CD4-positive, alpha-beta T cell (primary cell): ENCODE measurements at regions of chr15 and their contacts with region 1.

Region 1: DNA sequence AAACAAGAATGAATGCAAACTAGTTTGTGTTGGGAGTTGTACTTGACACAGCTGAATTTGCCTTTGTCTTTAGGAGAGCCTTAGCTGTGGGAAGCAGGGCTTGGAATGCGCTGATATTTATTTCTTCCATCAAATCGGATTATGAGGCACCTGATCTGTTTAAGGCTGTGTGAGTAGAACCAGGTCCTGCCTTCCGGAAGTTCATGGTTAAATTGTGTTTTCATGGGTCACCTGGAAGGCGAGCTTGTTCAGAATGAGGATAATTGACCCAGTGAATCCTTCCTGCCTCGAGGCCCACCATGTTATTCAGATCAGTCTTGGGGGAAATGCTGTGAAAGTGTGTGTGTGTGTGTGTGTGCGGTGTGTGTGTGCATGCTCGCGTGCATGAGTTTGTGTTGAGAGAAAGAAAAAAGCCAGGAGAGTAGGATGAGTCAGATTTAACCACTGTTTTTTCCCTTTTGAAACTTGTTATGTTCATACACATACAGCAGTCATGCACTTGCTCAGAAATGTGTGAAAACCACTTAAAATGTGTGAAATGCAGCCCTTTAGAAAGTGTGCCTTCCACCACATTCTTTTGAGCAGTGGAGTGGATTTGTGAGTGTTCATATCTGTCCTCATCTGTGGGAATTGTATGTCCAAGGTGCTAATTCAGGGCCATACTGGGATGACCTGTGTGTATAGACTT is 36.7 kb downstream of the SMAD3 start:
- DNase-seq: peak in 9 of 14 experiments; percentile 27 to 88 (median 62)
- ATAC-seq: peak; percentile 41
- H3K4me3 ChIP-seq: peak overlapping the region; percentile 27
- H3K4me3 Mint-ChIP-seq: no peak overlapping the region
- H3K27ac ChIP-seq: peak overlapping the region; percentile 56 to 82
- H3K27ac Mint-ChIP-seq: no peak overlapping the region
- H3K4me1 ChIP-seq: peaks cover 98% of the 10 kb centered on the region
- H3K4me1 Mint-ChIP-seq: peaks cover 26% of the 10 kb centered on the region
- H3K27me3 ChIP-seq: no peaks in the 10 kb centered on the region
- H3K27me3 Mint-ChIP-seq: no peaks in the 10 kb centered on the region
- CTCF ChIP-seq: no peak

Region 2: DNA sequence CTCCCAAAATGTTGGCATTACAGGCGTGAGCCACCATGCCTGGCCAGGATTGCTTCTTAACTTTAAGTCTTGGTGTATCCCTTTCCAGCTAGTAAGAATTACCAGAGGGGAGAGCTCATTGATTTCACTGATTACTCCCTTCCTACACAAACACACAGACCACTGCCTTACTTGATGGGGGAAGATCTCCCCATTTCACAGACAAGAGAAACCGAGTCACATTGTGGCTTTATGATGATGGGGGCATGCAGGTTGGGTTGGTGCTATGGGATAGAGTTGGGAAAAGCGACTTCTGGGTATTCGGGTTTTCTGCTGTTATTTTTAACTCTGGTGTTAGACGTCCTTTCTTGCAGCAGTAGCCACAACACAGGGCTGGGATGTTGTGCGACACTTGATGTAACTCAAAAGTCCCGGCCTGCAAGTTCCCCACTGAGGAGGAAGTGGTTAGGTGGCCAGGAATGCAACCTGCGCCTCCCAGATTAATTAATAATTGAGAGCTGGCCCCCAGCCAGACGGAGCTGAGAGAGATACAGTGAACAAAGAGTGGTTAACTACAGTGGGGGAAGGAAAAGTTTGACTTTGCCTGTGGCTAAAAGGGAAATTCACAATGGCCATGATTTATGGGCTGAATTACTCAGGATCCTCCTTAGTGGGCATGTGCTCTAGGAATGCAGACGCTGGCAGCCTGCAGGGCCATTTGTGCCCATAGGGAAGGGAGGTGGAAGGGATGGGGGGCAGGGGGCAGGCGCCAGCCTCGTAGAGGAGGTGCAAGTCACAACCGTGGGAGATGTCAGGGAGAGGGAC is 336.4 kb before region 1 on chr15:
- CTCF ChIA-PET with region 1: no interaction called
- POLR2A ChIA-PET with region 1: no interaction called
- intact Hi-C with region 1: no loop called
- DNase-seq: peak in 3 of 14 experiments; percentile 5 to 25 (median 21)
- ATAC-seq: no peak
- H3K4me3 ChIP-seq: no peak overlapping the region
- H3K4me3 Mint-ChIP-seq: no peak overlapping the region
- H3K27ac ChIP-seq: no peak overlapping the region
- H3K27ac Mint-ChIP-seq: no peak overlapping the region
- H3K4me1 ChIP-seq: no peaks in the 10 kb centered on the region
- H3K4me1 Mint-ChIP-seq: no peaks in the 10 kb centered on the region
- H3K27me3 ChIP-seq: peaks cover 23 to 27% of the 10 kb centered on the region in 2 experiments
- H3K27me3 Mint-ChIP-seq: peaks cover 61% of the 10 kb centered on the region
- CTCF ChIP-seq: no peak

Region 3: DNA sequence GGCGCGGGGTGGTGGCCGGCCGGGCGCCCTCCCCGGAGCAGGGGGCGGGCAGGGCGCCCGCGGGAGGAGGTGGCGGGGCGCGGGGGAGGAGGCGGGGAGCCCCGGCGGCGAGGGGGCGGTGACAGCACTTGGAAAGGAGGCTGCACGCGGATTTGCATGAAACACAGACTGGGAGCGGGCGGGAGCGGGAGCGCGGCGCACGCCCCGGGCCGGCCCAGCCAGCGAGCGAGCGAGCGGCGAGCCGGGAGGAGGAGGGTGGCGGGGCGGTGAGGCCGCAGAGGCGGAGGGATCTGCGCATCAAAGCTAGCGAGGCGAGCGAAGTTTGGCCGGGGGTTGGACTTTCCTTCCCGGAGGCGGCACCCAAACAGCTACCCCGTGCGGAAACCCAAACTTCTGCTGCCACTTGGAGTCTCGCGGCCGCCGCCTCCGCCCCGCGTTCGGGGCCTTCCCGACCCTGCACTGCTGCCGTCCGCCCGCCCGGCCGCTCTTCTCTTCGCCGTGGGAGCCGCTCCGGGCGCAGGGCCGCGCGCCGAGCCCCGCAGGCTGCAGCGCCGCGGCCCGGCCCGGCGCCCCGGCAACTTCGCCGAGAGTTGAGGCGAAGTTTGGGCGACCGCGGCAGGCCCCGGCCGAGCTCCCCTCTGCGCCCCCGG is 36.5 kb before region 1 on chr15 and contains the start of gene SMAD3:
- CTCF ChIA-PET with region 1: interaction called, 4 read pairs
- POLR2A ChIA-PET with region 1: interaction called, 18 read pairs
- intact Hi-C with region 1: loop called (anchors 5 kb)
- DNase-seq: peak; percentile 42 to 92 (median 66)
- ATAC-seq: peak; percentile 56
- H3K4me3 ChIP-seq: peak within 1 kb of the TSS; percentile 87
- H3K4me3 Mint-ChIP-seq: peak within 1 kb of the TSS; percentile 95
- H3K27ac ChIP-seq: peak within 1 kb of the TSS; percentile 53 to 62
- H3K27ac Mint-ChIP-seq: peak within 1 kb of the TSS; percentile 92
- H3K4me1 ChIP-seq: peaks cover 47% of the 10 kb centered on the region
- H3K4me1 Mint-ChIP-seq: peaks cover 61% of the 10 kb centered on the region
- H3K27me3 ChIP-seq: no peaks in the 10 kb centered on the region
- H3K27me3 Mint-ChIP-seq: no peaks in the 10 kb centered on the region
- CTCF ChIP-seq: no peak
- total RNA-seq, gene SMAD3: 30.0 to 31.0 TPM

Region 4: GRCh38 chr15:67085818-67086636 is 16.0 kb before region 1 on chr15:
- CTCF ChIA-PET with region 1: interaction called, 11 read pairs
- POLR2A ChIA-PET with region 1: interaction called, 105 read pairs
- intact Hi-C with region 1: loop called (anchors 2 kb)
- DNase-seq: peak in 4 of 14 experiments; percentile 4 to 74 (median 64)
- ATAC-seq: no peak
- H3K4me3 ChIP-seq: no peak overlapping the region
- H3K4me3 Mint-ChIP-seq: peak overlapping the region; percentile 34
- H3K27ac ChIP-seq: no peak overlapping the region
- H3K27ac Mint-ChIP-seq: peak overlapping the region; percentile 89
- H3K4me1 ChIP-seq: peaks cover 100% of the 10 kb centered on the region
- H3K4me1 Mint-ChIP-seq: peaks cover 95% of the 10 kb centered on the region
- H3K27me3 ChIP-seq: no peaks in the 10 kb centered on the region
- H3K27me3 Mint-ChIP-seq: no peaks in the 10 kb centered on the region
- CTCF ChIP-seq: no peak

Region 5: DNA sequence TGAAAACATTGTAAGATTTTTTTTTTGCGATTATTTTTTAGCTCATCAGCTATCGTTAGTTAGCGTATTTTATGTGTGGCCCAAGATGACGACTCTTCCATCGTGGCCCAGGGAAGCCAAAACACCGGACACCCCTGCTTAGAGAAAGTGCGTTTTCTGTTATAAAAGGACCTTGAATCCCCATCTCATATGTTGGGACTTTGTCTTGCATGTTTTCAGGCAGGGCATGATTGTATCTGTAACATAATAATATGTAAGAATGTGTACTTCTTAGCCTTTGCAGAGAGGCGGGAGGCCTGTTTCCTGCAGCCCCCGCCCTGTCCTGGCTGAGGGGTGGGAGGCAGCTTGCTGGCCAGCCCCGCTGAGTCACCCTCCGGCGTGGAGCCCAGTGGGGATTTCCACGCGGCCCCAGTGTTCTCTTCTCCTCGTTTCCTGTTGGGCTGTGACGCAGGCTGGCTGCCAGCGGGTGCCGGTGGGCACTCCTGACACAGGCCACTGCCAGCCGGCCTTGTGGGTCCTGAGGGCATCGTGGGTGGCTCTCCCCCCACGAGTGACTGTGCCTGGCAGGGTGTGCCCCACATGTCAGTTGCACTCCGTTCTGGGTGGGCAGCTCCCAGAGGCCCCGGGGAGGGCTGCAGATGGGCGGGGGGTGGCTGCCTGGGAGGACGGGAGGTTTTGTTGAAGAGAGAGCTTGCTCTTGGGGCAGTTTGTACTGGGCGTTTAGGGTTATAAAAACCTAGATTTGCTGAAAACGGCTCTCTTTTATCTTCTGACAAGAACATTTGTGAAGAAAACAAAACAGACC is 19.0 kb after region 1 on chr15:
- CTCF ChIA-PET with region 1: interaction called, 5 read pairs
- POLR2A ChIA-PET with region 1: interaction called, 18 read pairs
- intact Hi-C with region 1: loop called in 1 of 2 experiments (anchors 2 kb)
- DNase-seq: peak; percentile 67 to 96 (median 82)
- ATAC-seq: peak; percentile 86
- H3K4me3 ChIP-seq: peak overlapping the region; percentile 51
- H3K4me3 Mint-ChIP-seq: peak overlapping the region; percentile 77
- H3K27ac ChIP-seq: peak overlapping the region; percentile 85 to 96
- H3K27ac Mint-ChIP-seq: peak overlapping the region; percentile 96
- H3K4me1 ChIP-seq: peaks cover 94% of the 10 kb centered on the region
- H3K4me1 Mint-ChIP-seq: peaks cover 90% of the 10 kb centered on the region
- H3K27me3 ChIP-seq: no peaks in the 10 kb centered on the region
- H3K27me3 Mint-ChIP-seq: no peaks in the 10 kb centered on the region
- CTCF ChIP-seq: no peak

Region 6: DNA sequence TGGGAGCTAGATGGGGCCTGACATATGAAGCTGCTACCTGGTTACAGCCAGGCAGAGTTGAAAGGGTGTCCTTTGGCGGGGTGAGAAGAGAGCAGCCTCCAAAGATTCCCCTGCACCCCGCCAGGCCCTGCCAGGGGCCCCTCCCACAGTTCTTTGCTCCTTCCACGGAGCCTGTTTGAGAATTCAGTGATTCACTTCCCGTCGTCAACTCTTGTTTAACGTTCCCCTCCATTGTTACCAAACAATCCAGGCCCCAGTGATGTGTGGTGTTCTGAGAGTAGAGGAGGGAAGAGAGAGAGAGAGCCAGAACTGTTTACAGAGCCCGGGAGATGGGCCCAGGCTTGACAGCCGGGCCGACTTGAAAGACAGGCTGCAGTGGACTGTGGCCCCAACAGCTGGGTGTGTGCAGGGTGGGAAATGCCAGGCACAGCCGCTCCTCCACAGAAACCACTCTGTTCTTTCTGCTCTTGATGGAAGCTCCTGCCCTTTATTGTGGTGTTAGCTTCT is 44.9 kb after region 1 on chr15:
- CTCF ChIA-PET with region 1: no interaction called
- POLR2A ChIA-PET with region 1: interaction called, 4 read pairs
- intact Hi-C with region 1: loop called in 1 of 2 experiments (anchors 5 kb)
- DNase-seq: peak in 9 of 14 experiments; percentile 11 to 73 (median 46)
- ATAC-seq: peak; percentile 75
- H3K4me3 ChIP-seq: no peak overlapping the region
- H3K4me3 Mint-ChIP-seq: peak overlapping the region; percentile 52
- H3K27ac ChIP-seq: peak overlapping the region; percentile 5 to 13
- H3K27ac Mint-ChIP-seq: peak overlapping the region; percentile 88
- H3K4me1 ChIP-seq: peaks cover 86% of the 10 kb centered on the region
- H3K4me1 Mint-ChIP-seq: peaks cover 85% of the 10 kb centered on the region
- H3K27me3 ChIP-seq: no peaks in the 10 kb centered on the region
- H3K27me3 Mint-ChIP-seq: no peaks in the 10 kb centered on the region
- CTCF ChIP-seq: no peak